ENCODE measurements at regions of chr18 and their contacts with region 1.

Region 1: GRCh38 chr18:6543330-6543908 is 128.7 kb upstream of the L3MBTL4 start:
- DNase-seq: no peak
- ATAC-seq: peak in 3 of 4 donors; percentile 44 to 50 (median 44)
- H3K4me3 ChIP-seq: no peak overlapping the region
- H3K27ac ChIP-seq: no peak overlapping the region
- H3K4me1 ChIP-seq: peaks cover 0 to 9% (median 0%) of the 10 kb centered on the region in 3 donors
- H3K27me3 ChIP-seq: no peaks in the 10 kb centered on the region
- CTCF ChIP-seq: peak in 3 of 4 donors; percentile 19 to 51 (median 38)

Region 2: GRCh38 chr18:6821356-6821755 is 277.9 kb after region 1 on chr18:
- intact Hi-C with region 1: no loop called
- DNase-seq: no peak
- ATAC-seq: no peak
- H3K4me3 ChIP-seq: no peak overlapping the region
- H3K27ac ChIP-seq: no peak overlapping the region
- H3K4me1 ChIP-seq: no peaks in the 10 kb centered on the region
- H3K27me3 ChIP-seq: no peaks in the 10 kb centered on the region
- CTCF ChIP-seq: no peak

Region 3: GRCh38 chr18:6874316-6874715 is 330.9 kb after region 1 on chr18:
- intact Hi-C with region 1: loop called in 1 of 3 experiments (anchors 5 kb)
- DNase-seq: no peak
- ATAC-seq: no peak
- H3K4me3 ChIP-seq: no peak overlapping the region
- H3K27ac ChIP-seq: no peak overlapping the region
- H3K4me1 ChIP-seq: no peaks in the 10 kb centered on the region
- H3K27me3 ChIP-seq: no peaks in the 10 kb centered on the region
- CTCF ChIP-seq: no peak